Caco-2 (cell line): ENCODE measurements at regions of chr2 and their contacts with region 1.

Region 1: DNA sequence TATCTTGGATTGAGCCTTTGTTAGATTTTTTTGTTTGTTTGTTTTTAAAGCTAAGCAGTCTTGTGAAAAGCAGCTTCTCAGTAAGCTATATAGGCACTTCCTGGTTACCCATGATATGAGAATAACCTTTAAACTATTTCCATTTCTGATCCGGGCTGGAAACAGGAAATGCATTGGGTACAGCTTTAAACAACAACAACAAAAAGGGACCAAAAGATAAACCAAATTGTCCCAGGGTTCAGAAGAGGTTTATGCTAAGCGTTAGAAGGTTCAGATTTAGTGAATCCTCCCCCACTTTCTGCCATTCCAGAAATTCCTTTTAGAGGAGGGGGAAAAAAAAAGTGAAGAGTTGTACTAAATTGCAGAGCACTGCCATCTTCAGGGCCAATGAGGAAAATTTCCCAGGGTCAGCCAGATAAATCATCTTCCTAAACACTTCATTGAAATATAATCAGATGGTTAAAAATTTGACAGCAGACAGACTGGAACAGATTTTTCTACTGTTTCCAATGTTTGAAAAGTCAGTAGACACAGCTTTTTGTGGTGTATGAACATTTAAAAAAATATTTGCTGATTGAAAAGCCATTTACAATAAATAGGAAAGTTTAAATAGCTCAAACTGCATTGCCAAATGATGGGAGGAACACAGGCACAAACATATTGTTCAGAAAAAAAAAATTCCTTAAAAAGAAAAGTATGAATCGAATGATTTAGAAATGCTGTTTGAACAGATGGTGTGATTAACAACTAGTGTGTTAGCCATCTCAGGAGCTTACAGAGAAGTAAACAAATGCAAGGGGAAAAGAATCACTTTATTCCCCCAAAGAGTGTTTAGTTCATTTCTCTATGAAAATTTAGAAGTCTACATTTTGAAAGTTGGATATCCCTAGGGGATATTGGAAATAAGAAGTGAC is 189.9 kb upstream of the TANK start:
- DNase-seq: peak; percentile 61 to 73
- H3K4me3 ChIP-seq: peak overlapping the region; percentile 6; the same call in 1 of the 2 replicates
- H3K4me3 Mint-ChIP-seq: peak overlapping the region; percentile 68
- H3K27ac Mint-ChIP-seq: peak overlapping the region; percentile 91
- H3K4me1 ChIP-seq: no peaks in the 10 kb centered on the region
- H3K4me1 Mint-ChIP-seq: no peaks in the 10 kb centered on the region
- H3K27me3 ChIP-seq: no peaks in the 10 kb centered on the region
- H3K27me3 Mint-ChIP-seq: no peaks in the 10 kb centered on the region
- CTCF ChIP-seq: peak; percentile 77 to 79

Region 2: GRCh38 chr2:160087854-160088745 is 882.2 kb before region 1 on chr2:
- CTCF ChIA-PET with region 1: no interaction called
- POLR2A ChIA-PET with region 1: no interaction called
- intact Hi-C with region 1: loop called (anchors 5 kb)
- DNase-seq: peak in 1 of 2 experiments; percentile 33
- H3K4me3 ChIP-seq: no peak overlapping the region
- H3K4me3 Mint-ChIP-seq: no peak overlapping the region
- H3K27ac Mint-ChIP-seq: no peak overlapping the region
- H3K4me1 ChIP-seq: no peaks in the 10 kb centered on the region
- H3K4me1 Mint-ChIP-seq: no peaks in the 10 kb centered on the region
- H3K27me3 ChIP-seq: no peaks in the 10 kb centered on the region
- H3K27me3 Mint-ChIP-seq: no peaks in the 10 kb centered on the region
- CTCF ChIP-seq: peak; percentile 3 to 39

Region 3: GRCh38 chr2:160252278-160252887 is 717.9 kb before region 1 on chr2:
- CTCF ChIA-PET with region 1: interaction called, 6 read pairs
- POLR2A ChIA-PET with region 1: interaction called, 10 read pairs
- intact Hi-C with region 1: loop called (anchors 1 kb)
- DNase-seq: peak in 1 of 2 experiments; percentile 31
- H3K4me3 ChIP-seq: no peak overlapping the region
- H3K4me3 Mint-ChIP-seq: no peak overlapping the region
- H3K27ac Mint-ChIP-seq: no peak overlapping the region
- H3K4me1 ChIP-seq: peaks cover 15% of the 10 kb centered on the region; the same call in 1 of the 2 replicates
- H3K4me1 Mint-ChIP-seq: peaks cover 7% of the 10 kb centered on the region
- H3K27me3 ChIP-seq: no peaks in the 10 kb centered on the region
- H3K27me3 Mint-ChIP-seq: no peaks in the 10 kb centered on the region
- CTCF ChIP-seq: peak; percentile 75 to 80

Region 4: GRCh38 chr2:160278879-160279177 is 691.5 kb before region 1 on chr2:
- CTCF ChIA-PET with region 1: interaction called, 4 read pairs
- POLR2A ChIA-PET with region 1: no interaction called
- intact Hi-C with region 1: loop called (anchors 1 kb)
- DNase-seq: no peak
- H3K4me3 ChIP-seq: no peak overlapping the region
- H3K4me3 Mint-ChIP-seq: no peak overlapping the region
- H3K27ac Mint-ChIP-seq: no peak overlapping the region
- H3K4me1 ChIP-seq: peaks cover 6% of the 10 kb centered on the region; the same call in 1 of the 2 replicates
- H3K4me1 Mint-ChIP-seq: no peaks in the 10 kb centered on the region
- H3K27me3 ChIP-seq: no peaks in the 10 kb centered on the region
- H3K27me3 Mint-ChIP-seq: no peaks in the 10 kb centered on the region
- CTCF ChIP-seq: peak; percentile 18 to 50

Region 5: DNA sequence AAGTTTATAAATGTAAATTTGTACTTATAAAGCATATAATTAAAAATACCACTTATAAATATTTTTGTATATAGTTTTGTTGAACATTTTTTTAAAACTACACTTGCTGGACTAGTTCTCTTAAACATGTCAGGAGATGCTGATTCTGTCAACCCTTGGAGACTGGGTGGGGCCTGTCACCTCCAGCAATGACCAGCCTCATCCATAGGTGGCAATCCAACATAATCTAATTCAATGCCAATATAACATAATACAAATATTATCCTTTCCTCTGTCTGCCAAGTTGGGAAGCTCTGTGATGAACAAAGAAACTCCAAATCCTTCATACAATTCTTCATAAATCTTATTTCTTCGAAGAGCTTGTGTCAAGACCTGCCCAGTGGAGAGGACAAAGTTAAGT is 617.1 kb before region 1 on chr2:
- CTCF ChIA-PET with region 1: interaction called, 4 read pairs
- POLR2A ChIA-PET with region 1: no interaction called
- intact Hi-C with region 1: loop called (anchors 1 kb)
- DNase-seq: peak in 1 of 2 experiments; percentile 21
- H3K4me3 ChIP-seq: no peak overlapping the region
- H3K4me3 Mint-ChIP-seq: no peak overlapping the region
- H3K27ac Mint-ChIP-seq: no peak overlapping the region
- H3K4me1 ChIP-seq: no peaks in the 10 kb centered on the region
- H3K4me1 Mint-ChIP-seq: peaks cover 20% of the 10 kb centered on the region
- H3K27me3 ChIP-seq: no peaks in the 10 kb centered on the region
- H3K27me3 Mint-ChIP-seq: no peaks in the 10 kb centered on the region
- CTCF ChIP-seq: peak in 1 of 2 experiments; percentile 13

Region 6: GRCh38 chr2:160429248-160430000 is 540.9 kb before region 1 on chr2:
- CTCF ChIA-PET with region 1: interaction called, 3 read pairs
- POLR2A ChIA-PET with region 1: no interaction called
- intact Hi-C with region 1: loop called (anchors 1 kb)
- DNase-seq: peak in 1 of 2 experiments; percentile 18
- H3K4me3 ChIP-seq: no peak overlapping the region
- H3K4me3 Mint-ChIP-seq: no peak overlapping the region
- H3K27ac Mint-ChIP-seq: no peak overlapping the region
- H3K4me1 ChIP-seq: peaks cover 16% of the 10 kb centered on the region
- H3K4me1 Mint-ChIP-seq: peaks cover 17% of the 10 kb centered on the region
- H3K27me3 ChIP-seq: no peaks in the 10 kb centered on the region
- H3K27me3 Mint-ChIP-seq: no peaks in the 10 kb centered on the region
- CTCF ChIP-seq: peak; percentile 43 to 48

Region 7: DNA sequence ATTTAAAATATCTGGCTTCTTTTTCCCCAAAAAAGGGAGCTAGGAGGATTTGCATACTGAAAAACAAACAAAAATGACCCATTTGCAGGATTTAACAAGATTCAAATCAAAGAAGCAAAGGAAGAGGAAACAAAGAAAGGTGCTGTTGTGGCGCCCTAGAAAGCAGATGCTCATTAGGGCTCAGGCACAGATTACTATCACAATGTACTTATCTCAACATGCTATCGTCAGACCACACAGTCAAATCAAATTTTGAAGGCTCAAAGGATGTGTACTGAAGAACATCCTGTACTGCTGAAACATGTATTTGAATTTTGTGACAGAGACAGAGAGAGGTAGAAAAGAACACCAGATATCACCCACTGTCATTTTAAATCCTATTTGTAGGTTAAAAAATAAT is 487.6 kb before region 1 on chr2:
- CTCF ChIA-PET with region 1: no interaction called
- POLR2A ChIA-PET with region 1: no interaction called
- intact Hi-C with region 1: no loop called
- DNase-seq: no peak
- H3K4me3 ChIP-seq: no peak overlapping the region
- H3K4me3 Mint-ChIP-seq: no peak overlapping the region
- H3K27ac Mint-ChIP-seq: no peak overlapping the region
- H3K4me1 ChIP-seq: peaks cover 7% of the 10 kb centered on the region; the same call in 1 of the 2 replicates
- H3K4me1 Mint-ChIP-seq: peaks cover 13% of the 10 kb centered on the region
- H3K27me3 ChIP-seq: no peaks in the 10 kb centered on the region
- H3K27me3 Mint-ChIP-seq: no peaks in the 10 kb centered on the region
- CTCF ChIP-seq: no peak

Region 8: GRCh38 chr2:160730296-160730995 is 239.9 kb before region 1 on chr2:
- CTCF ChIA-PET with region 1: interaction called, 5 read pairs
- POLR2A ChIA-PET with region 1: no interaction called
- intact Hi-C with region 1: loop called (anchors 1 kb)
- DNase-seq: peak; percentile 75
- H3K4me3 ChIP-seq: no peak overlapping the region
- H3K4me3 Mint-ChIP-seq: peak overlapping the region; percentile 46
- H3K27ac Mint-ChIP-seq: peak overlapping the region; percentile 71
- H3K4me1 ChIP-seq: peaks cover 32% of the 10 kb centered on the region
- H3K4me1 Mint-ChIP-seq: peaks cover 40% of the 10 kb centered on the region
- H3K27me3 ChIP-seq: no peaks in the 10 kb centered on the region
- H3K27me3 Mint-ChIP-seq: no peaks in the 10 kb centered on the region
- CTCF ChIP-seq: no peak